Naive thymus-derived CD4-positive, alpha-beta T cell (primary cell): ENCODE measurements at regions of chr5 and their contacts with region 1.

Region 1: DNA sequence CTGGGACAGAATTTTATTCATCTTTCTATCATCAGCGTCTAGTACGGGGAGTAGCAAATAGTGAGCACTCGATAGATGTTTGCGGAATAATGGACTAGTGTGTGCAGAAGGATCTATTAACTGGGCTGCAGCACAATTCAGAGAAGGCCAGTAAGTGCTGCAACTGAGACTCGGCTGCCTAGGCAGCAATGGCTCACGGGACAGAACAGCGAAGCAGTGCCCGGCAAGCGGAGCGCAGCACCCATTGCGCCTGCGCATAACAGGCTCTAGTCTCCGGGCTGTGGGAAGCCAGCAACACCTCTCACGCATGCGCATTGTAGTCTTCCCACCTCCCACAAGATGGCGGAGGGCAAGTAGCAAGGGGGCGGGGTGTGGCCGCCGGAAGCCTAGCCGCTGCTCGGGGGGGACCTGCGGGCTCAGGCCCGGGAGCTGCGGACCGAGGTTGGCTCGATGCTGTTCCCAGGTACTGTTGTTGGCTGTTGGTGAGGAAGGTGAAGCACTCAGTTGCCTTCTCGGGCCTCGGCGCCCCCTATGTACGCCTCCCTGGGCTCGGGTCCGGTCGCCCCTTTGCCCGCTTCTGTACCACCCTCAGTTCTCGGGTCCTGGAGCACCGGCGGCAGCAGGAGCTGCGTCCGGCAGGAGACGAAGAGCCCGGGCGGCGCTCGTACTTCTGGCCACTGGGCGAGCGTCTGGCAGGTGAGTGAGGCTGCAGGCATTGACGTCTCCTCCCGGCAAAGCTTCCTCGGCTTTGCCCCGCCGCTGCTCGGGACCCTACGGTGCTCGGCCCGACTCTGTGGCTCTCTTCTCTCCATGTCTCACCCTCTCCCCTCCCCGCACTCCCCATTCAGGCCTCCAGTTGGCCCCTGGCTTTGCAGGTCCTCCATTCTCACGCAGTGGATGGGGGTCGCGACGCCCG is 30.2 kb upstream of the APC start:
- DNase-seq: peak; percentile 83 to 98 (median 97)
- ATAC-seq: peak; percentile 96
- H3K4me3 ChIP-seq: peak overlapping the region; percentile 92
- H3K4me3 Mint-ChIP-seq: peak overlapping the region; percentile 79 to 98 (median 94)
- H3K27ac ChIP-seq: peak overlapping the region; percentile 82
- H3K27ac Mint-ChIP-seq: peak overlapping the region; percentile 88 to 96 (median 92)
- H3K4me1 ChIP-seq: peaks cover 29 to 47% of the 10 kb centered on the region in 2 donors
- H3K4me1 Mint-ChIP-seq: peaks cover 50 to 62% (median 57%) of the 10 kb centered on the region in 7 donors
- H3K27me3 ChIP-seq: no peaks in the 10 kb centered on the region
- H3K27me3 Mint-ChIP-seq: peaks cover 0 to 8% (median 0%) of the 10 kb centered on the region in 5 donors

Region 2: GRCh38 chr5:111092062-111092853 is 1615.2 kb before region 1 on chr5 and contains the start of gene WDR36:
- CTCF ChIA-PET with region 1: no interaction called
- POLR2A ChIA-PET with region 1: no interaction called
- intact Hi-C with region 1: loop called (anchors 1 to 2 kb)
- DNase-seq: peak; percentile 80 to 95 (median 87)
- ATAC-seq: peak; percentile 99
- H3K4me3 ChIP-seq: peak within 1 kb of the TSS; percentile 88
- H3K4me3 Mint-ChIP-seq: peak within 1 kb of the TSS; percentile 91 to 99 (median 98)
- H3K27ac ChIP-seq: peak within 1 kb of the TSS; percentile 82
- H3K27ac Mint-ChIP-seq: peak within 1 kb of the TSS; percentile 66 to 98 (median 94)
- H3K4me1 ChIP-seq: peaks cover 11 to 20% of the 10 kb centered on the region in 2 donors
- H3K4me1 Mint-ChIP-seq: peaks cover 22 to 49% (median 39%) of the 10 kb centered on the region in 7 donors
- H3K27me3 ChIP-seq: no peaks in the 10 kb centered on the region
- H3K27me3 Mint-ChIP-seq: peaks cover 0 to 12% (median 5%) of the 10 kb centered on the region in 5 donors
- total RNA-seq, gene WDR36: 24.8 to 37.4 (median 29.7) TPM

Region 3: DNA sequence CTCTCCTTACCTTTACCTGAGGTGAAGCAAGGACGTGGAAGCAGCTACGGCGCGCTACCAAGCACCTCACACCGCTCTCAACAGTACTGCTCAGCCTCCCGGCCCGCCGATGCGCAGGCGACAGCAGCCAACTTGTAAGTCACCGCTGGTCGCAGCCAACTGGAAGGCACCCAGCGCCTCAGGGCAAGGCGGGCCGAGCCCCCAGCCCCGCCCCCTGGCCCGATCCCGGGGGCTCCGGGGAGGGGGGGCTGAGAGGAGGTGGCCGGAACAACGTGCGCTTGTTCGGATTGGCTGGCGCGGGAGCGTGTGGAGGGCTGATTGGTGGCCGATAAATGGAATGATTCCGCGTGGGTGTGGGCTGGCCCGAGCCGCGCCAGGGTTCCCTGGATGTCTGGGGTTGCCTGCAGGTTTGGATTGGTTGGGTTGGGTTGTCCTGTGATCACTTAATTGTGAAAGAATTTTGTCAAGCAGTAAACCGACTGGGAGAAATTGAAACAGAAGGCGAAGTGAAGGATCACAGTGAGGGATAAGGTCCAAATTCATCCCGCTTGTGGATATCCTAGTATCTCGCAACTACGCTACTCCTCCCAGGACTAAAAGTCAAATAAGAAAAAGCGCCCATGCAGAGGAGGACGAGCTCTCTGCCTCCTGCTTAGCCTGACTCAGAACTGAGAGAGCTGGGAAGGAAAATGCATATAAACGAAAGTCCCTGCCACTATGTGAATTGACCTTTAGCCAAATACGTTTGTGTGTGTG is 1194.9 kb before region 1 on chr5 and contains the start of gene STARD4:
- CTCF ChIA-PET with region 1: no interaction called
- POLR2A ChIA-PET with region 1: no interaction called
- intact Hi-C with region 1: loop called (anchors 5 to 10 kb)
- DNase-seq: peak; percentile 79 to 94 (median 92)
- ATAC-seq: peak; percentile 97
- H3K4me3 ChIP-seq: peak within 1 kb of the TSS; percentile 81
- H3K4me3 Mint-ChIP-seq: peak within 1 kb of the TSS; percentile 91 to 100 (median 98)
- H3K27ac ChIP-seq: peak within 1 kb of the TSS; percentile 73
- H3K27ac Mint-ChIP-seq: peak within 1 kb of the TSS; percentile 90 to 98 (median 94)
- H3K4me1 ChIP-seq: peaks cover 0 to 14% of the 10 kb centered on the region in 2 donors
- H3K4me1 Mint-ChIP-seq: peaks cover 17 to 53% (median 28%) of the 10 kb centered on the region in 7 donors
- H3K27me3 ChIP-seq: no peaks in the 10 kb centered on the region
- H3K27me3 Mint-ChIP-seq: no peaks in the 10 kb centered on the region
- total RNA-seq, gene STARD4: 11.1 to 70.8 (median 17.1) TPM

Region 4: GRCh38 chr5:112551419-112552032 is 155.9 kb before region 1 on chr5:
- CTCF ChIA-PET with region 1: no interaction called
- POLR2A ChIA-PET with region 1: no interaction called
- intact Hi-C with region 1: loop called in 1 of 2 experiments (anchors 2 kb)
- DNase-seq: peak in 7 of 9 donors; percentile 23 to 67 (median 48)
- ATAC-seq: peak; percentile 71
- H3K4me3 ChIP-seq: no peak overlapping the region
- H3K4me3 Mint-ChIP-seq: no peak overlapping the region
- H3K27ac ChIP-seq: no peak overlapping the region
- H3K27ac Mint-ChIP-seq: no peak overlapping the region
- H3K4me1 ChIP-seq: no peaks in the 10 kb centered on the region
- H3K4me1 Mint-ChIP-seq: peaks cover 0 to 4% (median 0%) of the 10 kb centered on the region in 7 donors
- H3K27me3 ChIP-seq: no peaks in the 10 kb centered on the region
- H3K27me3 Mint-ChIP-seq: peaks cover 0 to 16% (median 5%) of the 10 kb centered on the region in 5 donors

Region 5: GRCh38 chr5:112737463-112738190 is 30.2 kb after region 1 on chr5 and contains the start of gene APC:
- CTCF ChIA-PET with region 1: no interaction called
- POLR2A ChIA-PET with region 1: interaction called, 4 read pairs
- intact Hi-C with region 1: loop called (anchors 1 kb)
- DNase-seq: peak; percentile 52 to 81 (median 66)
- ATAC-seq: peak; percentile 97
- H3K4me3 ChIP-seq: peak within 1 kb of the TSS; percentile 76
- H3K4me3 Mint-ChIP-seq: peak within 1 kb of the TSS; percentile 93 to 98 (median 95)
- H3K27ac ChIP-seq: peak within 1 kb of the TSS; percentile 58
- H3K27ac Mint-ChIP-seq: peak within 1 kb of the TSS; percentile 3 to 88 (median 51)
- H3K4me1 ChIP-seq: peaks cover 0 to 9% of the 10 kb centered on the region in 2 donors
- H3K4me1 Mint-ChIP-seq: peaks cover 18 to 63% (median 38%) of the 10 kb centered on the region in 7 donors
- H3K27me3 ChIP-seq: no peaks in the 10 kb centered on the region
- H3K27me3 Mint-ChIP-seq: peaks cover 0 to 5% (median 0%) of the 10 kb centered on the region in 5 donors
- total RNA-seq, gene APC: 25.1 to 53.2 (median 37.6) TPM

Region 6: GRCh38 chr5:112860929-112861637 is 153.6 kb after region 1 on chr5 and contains the start of gene SRP19:
- CTCF ChIA-PET with region 1: no interaction called
- POLR2A ChIA-PET with region 1: interaction called, 4 read pairs
- intact Hi-C with region 1: loop called (anchors 1 kb)
- DNase-seq: peak; percentile 78 to 93 (median 90)
- ATAC-seq: peak; percentile 96
- H3K4me3 ChIP-seq: peak within 1 kb of the TSS; percentile 88
- H3K4me3 Mint-ChIP-seq: peak within 1 kb of the TSS; percentile 91 to 97 (median 96)
- H3K27ac ChIP-seq: peak within 1 kb of the TSS; percentile 89
- H3K27ac Mint-ChIP-seq: peak within 1 kb of the TSS; percentile 95 to 99 (median 97)
- H3K4me1 ChIP-seq: peaks cover 19% of the 10 kb centered on the region in 2 donors
- H3K4me1 Mint-ChIP-seq: peaks cover 5 to 41% (median 32%) of the 10 kb centered on the region in 7 donors
- H3K27me3 ChIP-seq: no peaks in the 10 kb centered on the region
- H3K27me3 Mint-ChIP-seq: peaks cover 5 to 18% (median 6%) of the 10 kb centered on the region in 5 donors
- total RNA-seq, gene SRP19: 34.2 to 70.9 (median 41.5) TPM

Region 7: DNA sequence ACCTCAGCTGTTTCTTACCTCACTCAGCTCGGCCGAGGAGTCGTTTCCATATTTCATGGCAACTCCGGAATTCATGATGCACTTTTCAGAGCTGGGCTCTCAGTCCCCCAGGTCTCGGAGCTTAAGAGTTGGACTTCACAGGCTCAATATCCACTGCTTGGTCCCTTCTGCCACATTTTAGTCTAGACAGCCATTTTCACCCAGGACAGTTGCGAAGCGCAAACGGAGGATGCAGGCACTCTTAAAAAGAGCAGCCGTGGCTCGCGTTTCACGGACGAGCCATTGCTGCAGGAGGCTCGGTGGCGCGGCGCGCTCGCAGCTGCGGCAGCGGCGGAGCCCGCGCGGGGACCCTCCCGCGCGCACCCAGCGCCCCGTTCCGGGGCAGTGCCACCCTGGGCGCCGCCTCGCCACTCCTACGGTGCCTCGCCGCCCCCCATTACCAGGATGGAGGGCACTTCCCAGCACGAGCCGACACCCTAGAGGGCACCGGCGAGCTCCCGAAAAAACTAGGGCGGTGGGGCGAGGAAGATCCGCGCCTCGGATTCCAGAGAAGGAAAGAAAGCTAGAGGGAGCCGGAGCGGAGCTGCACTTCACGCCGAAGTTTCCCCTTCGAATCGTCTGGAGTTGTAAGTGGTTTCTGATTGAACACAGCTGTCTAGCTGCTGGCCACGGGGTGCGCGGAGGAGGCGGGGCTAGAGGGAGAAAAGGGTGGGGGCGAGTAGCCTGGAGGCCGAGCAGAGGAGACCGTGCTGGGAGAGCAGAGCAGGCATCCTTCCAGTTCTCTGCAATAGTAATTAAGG is 587.1 kb after region 1 on chr5:
- CTCF ChIA-PET with region 1: no interaction called
- POLR2A ChIA-PET with region 1: no interaction called
- intact Hi-C with region 1: loop called in 1 of 2 experiments (anchors 10 kb)
- DNase-seq: peak; percentile 30 to 72 (median 62)
- ATAC-seq: peak; percentile 92
- H3K4me3 ChIP-seq: peak overlapping the region; percentile 64
- H3K4me3 Mint-ChIP-seq: peak overlapping the region; percentile 88 to 96 (median 92)
- H3K27ac ChIP-seq: peak overlapping the region; percentile 43
- H3K27ac Mint-ChIP-seq: peak overlapping the region in 6 of 9 donors; percentile 21 to 86 (median 46)
- H3K4me1 ChIP-seq: peaks cover 8 to 11% of the 10 kb centered on the region in 2 donors
- H3K4me1 Mint-ChIP-seq: peaks cover 13 to 28% (median 21%) of the 10 kb centered on the region in 7 donors
- H3K27me3 ChIP-seq: no peaks in the 10 kb centered on the region
- H3K27me3 Mint-ChIP-seq: peaks cover 30 to 82% (median 59%) of the 10 kb centered on the region in 5 donors